Prostate gland (tissue), 2 donors: ENCODE measurements at regions of chr1 and their contacts with region 1.

Region 1: GRCh38 chr1:48471691-48472576 is at the start of gene SPATA6:
- DNase-seq: peak; percentile 97
- H3K4me3 ChIP-seq: peak within 1 kb of the TSS; percentile 64 to 77
- H3K27ac ChIP-seq: peak within 1 kb of the TSS; percentile 89 to 94
- H3K4me1 ChIP-seq: no peaks in the 10 kb centered on the region
- H3K27me3 ChIP-seq: no peaks in the 10 kb centered on the region
- CTCF ChIP-seq: no peak
- POLR2A ChIP-seq: peak; percentile 86
- total RNA-seq, gene SPATA6: 12.2 to 23.2 TPM

Region 2: DNA sequence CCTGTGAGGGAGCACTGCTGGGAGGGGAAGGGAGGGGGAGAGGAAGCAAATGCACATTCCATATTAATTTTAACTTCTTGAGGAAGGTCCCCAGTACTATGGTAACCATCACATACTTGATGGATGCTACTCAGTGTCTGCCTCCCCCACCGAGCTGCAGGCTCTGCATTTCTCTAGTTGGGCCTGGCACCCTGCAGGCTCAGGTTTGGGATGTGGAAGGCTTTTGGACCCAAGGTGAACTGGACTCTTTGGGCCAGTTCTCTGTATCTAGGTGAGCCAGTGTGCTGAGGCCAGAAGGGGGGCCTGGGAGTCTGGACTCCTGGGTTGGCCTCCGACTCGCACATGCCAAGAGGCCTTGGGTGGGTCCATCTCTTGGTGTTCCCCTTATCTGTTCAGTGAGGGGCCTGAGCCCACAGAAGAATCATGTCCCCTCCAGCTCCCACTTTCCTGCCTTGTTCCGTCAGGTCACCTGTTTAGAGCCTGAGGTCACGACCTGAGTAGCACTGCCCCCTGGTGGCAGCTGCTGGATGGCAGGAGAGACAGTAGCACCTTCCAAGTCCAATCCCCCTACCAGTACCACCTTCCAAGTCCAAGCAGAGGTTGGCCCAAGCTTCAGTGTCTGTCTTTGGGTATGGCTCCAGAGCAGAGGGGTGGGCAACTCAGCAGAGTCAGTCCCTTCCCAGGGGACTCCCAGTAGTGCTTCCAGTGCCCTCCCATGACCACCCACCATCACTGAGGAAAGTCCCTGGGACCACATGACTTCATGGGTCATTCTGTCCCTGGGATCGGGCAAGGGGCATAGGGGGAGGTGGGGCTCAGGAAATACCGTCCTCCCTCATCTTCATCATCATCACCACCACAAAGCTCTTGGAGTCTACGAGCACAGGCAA is 716.6 kb before region 1 on chr1:
- intact Hi-C with region 1: loop called (anchors 10 kb)
- DNase-seq: no peak
- H3K4me3 ChIP-seq: no peak overlapping the region
- H3K27ac ChIP-seq: no peak overlapping the region
- H3K4me1 ChIP-seq: peaks cover 11% of the 10 kb centered on the region
- H3K27me3 ChIP-seq: no peaks in the 10 kb centered on the region
- CTCF ChIP-seq: peak in 2 of 4 experiments; percentile 9 to 24
- POLR2A ChIP-seq: no peak